HepG2 (cell line): ENCODE measurements at regions of chr19 and their contacts with region 1.

Region 1: DNA sequence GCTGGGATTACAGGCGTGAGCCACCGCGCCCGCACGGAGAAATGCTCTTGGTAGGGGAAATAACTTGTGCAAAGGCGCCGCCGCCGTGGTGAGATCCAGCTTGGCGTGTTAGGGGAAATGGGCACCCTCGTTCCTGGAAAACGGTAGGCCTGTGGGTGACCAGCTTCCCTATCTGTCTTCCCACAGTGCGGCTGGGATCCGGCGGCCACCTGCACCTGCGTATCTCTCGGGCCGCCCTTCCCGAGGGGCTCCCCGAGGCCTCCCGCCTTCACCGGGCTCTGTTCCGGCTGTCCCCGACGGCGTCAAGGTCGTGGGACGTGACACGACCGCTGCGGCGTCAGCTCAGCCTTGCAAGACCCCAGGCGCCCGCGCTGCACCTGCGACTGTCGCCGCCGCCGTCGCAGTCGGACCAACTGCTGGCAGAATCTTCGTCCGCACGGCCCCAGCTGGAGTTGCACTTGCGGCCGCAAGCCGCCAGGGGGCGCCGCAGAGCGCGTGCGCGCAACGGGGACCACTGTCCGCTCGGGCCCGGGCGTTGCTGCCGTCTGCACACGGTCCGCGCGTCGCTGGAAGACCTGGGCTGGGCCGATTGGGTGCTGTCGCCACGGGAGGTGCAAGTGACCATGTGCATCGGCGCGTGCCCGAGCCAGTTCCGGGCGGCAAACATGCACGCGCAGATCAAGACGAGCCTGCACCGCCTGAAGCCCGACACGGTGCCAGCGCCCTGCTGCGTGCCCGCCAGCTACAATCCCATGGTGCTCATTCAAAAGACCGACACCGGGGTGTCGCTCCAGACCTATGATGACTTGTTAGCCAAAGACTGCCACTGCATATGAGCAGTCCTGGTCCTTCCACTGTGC is 2.4 kb downstream of the GDF15 start:
- DNase-seq: peak; percentile 52
- ATAC-seq: peak; percentile 21
- H3K4me3 ChIP-seq: peak overlapping the region; percentile 86 to 95 (median 91); a peak in 5 of 6 replicates
- H3K27ac ChIP-seq: peak overlapping the region; percentile 80
- H3K4me1 ChIP-seq: peaks cover 39% of the 10 kb centered on the region
- H3K27me3 ChIP-seq: no peaks in the 10 kb centered on the region; a peak in 1 of 5 replicates
- CTCF ChIP-seq: peak; percentile 95
- EP300 ChIP-seq: peak in 1 of 2 experiments; percentile 11; a peak in 1 of 4 replicates
- POLR2A ChIP-seq: peak; percentile 36 to 53
- RAD21 ChIP-seq: peak; percentile 90

Region 2: DNA sequence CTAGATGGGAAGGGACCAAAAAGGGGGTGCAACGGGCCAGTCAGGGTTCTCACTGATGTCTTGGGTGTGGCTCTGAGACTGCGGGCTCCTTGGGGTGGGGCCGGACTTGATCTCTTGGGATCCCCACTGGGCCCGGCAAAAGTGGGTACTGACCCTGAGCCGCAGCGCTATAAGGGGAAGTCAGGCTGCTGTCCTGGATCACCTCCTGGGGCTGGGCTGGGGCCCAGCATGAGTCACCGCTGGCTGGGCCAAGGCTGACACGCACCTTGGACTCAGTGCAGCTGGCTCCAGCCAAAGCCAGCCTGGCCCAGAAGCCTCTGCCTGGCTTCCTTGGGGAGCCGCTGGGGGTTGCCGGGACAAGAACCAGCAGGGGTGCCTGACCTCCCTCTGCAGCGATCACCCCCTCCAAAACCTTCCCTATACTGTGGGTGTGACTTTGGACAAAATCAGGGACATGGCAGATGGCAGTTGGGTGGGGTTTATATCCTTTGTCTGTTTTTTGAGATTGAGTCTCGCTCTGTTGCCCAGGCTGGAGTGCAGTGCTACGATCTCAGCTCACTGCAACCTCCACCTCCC is 113.5 kb before region 1 on chr19:
- CTCF ChIA-PET with region 1: interaction called, 3 read pairs
- POLR2A ChIA-PET with region 1: interaction called, 87 read pairs
- in situ Hi-C with region 1: no loop called
- intact Hi-C with region 1: no loop called
- DNase-seq: peak; percentile 82
- ATAC-seq: peak; percentile 84
- H3K4me3 ChIP-seq: peak overlapping the region in 2 of 3 experiments; percentile 23 to 50; a peak in 3 of 6 replicates
- H3K27ac ChIP-seq: peak overlapping the region; percentile 73
- H3K4me1 ChIP-seq: peaks cover 66% of the 10 kb centered on the region
- H3K27me3 ChIP-seq: no peaks in the 10 kb centered on the region
- CTCF ChIP-seq: peak; percentile 42
- EP300 ChIP-seq: peak; percentile 44 to 61; a peak in 3 of 4 replicates
- POLR2A ChIP-seq: peak in 1 of 2 experiments; percentile 75
- RAD21 ChIP-seq: peak; percentile 39

Region 3: DNA sequence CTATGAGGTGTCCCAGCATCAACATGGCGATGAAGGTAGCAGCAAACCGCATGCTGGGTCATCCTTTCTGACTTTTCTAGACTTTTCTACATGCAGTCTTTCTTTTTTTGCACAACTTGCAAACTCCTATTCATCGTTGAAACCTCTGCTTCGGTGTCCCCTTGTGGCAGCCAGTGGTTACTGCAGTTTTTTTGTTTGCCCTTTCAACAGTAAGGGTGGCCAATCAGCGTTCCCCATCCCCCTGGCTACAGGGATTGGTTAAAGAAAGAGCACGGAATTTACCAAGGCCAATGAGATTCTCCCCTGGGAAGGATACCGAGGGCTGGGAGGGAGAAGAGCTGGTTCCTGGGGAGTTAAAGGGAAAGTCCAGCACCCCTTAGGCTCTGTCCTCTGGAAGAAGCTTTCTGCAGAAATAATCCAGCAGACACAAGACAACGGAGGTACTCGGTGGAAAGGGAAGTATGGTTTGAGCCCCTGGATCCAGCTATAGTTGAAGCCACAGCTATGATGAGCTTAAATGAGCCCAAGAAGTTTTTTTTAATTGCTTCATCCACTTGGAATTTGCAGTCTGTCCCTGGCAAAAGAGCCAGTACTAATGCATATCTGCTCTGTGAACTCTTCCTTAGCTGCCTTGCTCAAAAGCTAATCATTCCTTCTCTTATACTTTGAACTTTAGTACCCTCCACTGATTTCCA is 59.8 kb before region 1 on chr19:
- CTCF ChIA-PET with region 1: no interaction called
- POLR2A ChIA-PET with region 1: interaction called, 16 read pairs
- in situ Hi-C with region 1: no loop called
- intact Hi-C with region 1: no loop called
- DNase-seq: peak; percentile 97
- ATAC-seq: peak; percentile 92
- H3K4me3 ChIP-seq: peak overlapping the region; percentile 9 to 59 (median 29)
- H3K27ac ChIP-seq: peak overlapping the region; percentile 69
- H3K4me1 ChIP-seq: peaks cover 73% of the 10 kb centered on the region
- H3K27me3 ChIP-seq: no peaks in the 10 kb centered on the region
- CTCF ChIP-seq: peak; percentile 90
- EP300 ChIP-seq: 0 out of 4 replicates have a peak, but pooled peaks of 1 of the 2 experiments have one; percentile 9
- POLR2A ChIP-seq: peak in 1 of 2 experiments; percentile 71; a peak in 2 of 4 replicates
- RAD21 ChIP-seq: peak; percentile 58; the same call in 1 of the 2 replicates

Region 4: DNA sequence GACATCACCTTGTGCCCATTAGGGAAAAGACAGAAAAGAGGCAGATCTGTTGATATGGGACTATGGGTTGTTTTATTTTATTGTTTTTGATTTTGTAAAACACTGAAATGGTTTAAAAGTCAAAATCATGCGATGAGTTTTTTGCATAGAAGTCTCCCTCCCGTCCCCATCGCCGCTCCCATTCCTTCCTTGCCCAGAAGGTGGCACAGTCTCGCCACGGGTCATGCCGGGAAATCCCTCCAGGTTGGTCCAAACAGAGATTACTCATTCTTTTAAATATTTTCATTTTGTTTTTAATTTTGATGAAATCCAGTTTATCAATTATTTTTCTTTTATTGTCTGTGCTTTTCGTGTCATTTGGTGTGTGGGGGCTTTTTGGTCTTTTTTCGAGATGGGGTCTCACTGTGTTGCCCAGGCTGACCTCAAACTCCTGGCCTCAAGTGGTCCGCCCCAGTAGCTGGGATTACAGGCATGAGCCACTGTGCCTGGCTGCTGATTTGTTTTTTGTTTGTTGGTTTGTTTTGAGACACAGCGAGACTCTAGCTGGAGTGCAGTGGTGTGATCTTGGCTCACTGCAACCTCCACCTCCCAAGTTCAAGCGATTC is 38.7 kb before region 1 on chr19:
- CTCF ChIA-PET with region 1: interaction called, 20 read pairs
- POLR2A ChIA-PET with region 1: interaction called, 18 read pairs
- in situ Hi-C with region 1: no loop called
- intact Hi-C with region 1: loop called (anchors 5 kb)
- DNase-seq: peak; percentile 40
- ATAC-seq: peak; percentile 67
- H3K4me3 ChIP-seq: no peak overlapping the region
- H3K27ac ChIP-seq: no peak overlapping the region
- H3K4me1 ChIP-seq: peaks cover 18% of the 10 kb centered on the region; the same call in 1 of the 2 replicates
- H3K27me3 ChIP-seq: no peaks in the 10 kb centered on the region
- CTCF ChIP-seq: peak; percentile 83
- EP300 ChIP-seq: no peak
- POLR2A ChIP-seq: no peak
- RAD21 ChIP-seq: peak; percentile 81

Region 5: GRCh38 chr19:18373892-18374629 is 14.3 kb before region 1 on chr19:
- CTCF ChIA-PET with region 1: interaction called, 4 read pairs
- POLR2A ChIA-PET with region 1: interaction called, 514 read pairs
- in situ Hi-C with region 1: no loop called
- intact Hi-C with region 1: no loop called
- DNase-seq: peak; percentile 95
- ATAC-seq: peak; percentile 89
- H3K4me3 ChIP-seq: no peak overlapping the region
- H3K27ac ChIP-seq: peak overlapping the region; percentile 94
- H3K4me1 ChIP-seq: peaks cover 91% of the 10 kb centered on the region
- H3K27me3 ChIP-seq: no peaks in the 10 kb centered on the region
- CTCF ChIP-seq: no peak
- EP300 ChIP-seq: peak in 1 of 2 experiments; percentile 83; a peak in 2 of 4 replicates
- POLR2A ChIP-seq: peak in 1 of 2 experiments; percentile 64; a peak in 2 of 4 replicates
- RAD21 ChIP-seq: no peak

Region 6: GRCh38 chr19:18408053-18408476 is 19.7 kb after region 1 on chr19:
- CTCF ChIA-PET with region 1: interaction called, 10 read pairs
- POLR2A ChIA-PET with region 1: interaction called, 22 read pairs
- in situ Hi-C with region 1: no loop called
- intact Hi-C with region 1: loop called (anchors 2 kb)
- DNase-seq: no peak
- ATAC-seq: peak; percentile 62
- H3K4me3 ChIP-seq: no peak overlapping the region
- H3K27ac ChIP-seq: no peak overlapping the region
- H3K4me1 ChIP-seq: peaks cover 38% of the 10 kb centered on the region
- H3K27me3 ChIP-seq: no peaks in the 10 kb centered on the region
- CTCF ChIP-seq: peak; percentile 77
- EP300 ChIP-seq: no peak
- POLR2A ChIP-seq: no peak
- RAD21 ChIP-seq: peak; percentile 61; the same call in 1 of the 2 replicates